ENCODE measurements at regions of chr9 and their contacts with region 1.

Region 1: GRCh38 chr9:12329623-12329985 is 363.6 kb upstream of the TYRP1 start:
- DNase-seq: no peak
- H3K4me3 ChIP-seq: no peak overlapping the region
- H3K27ac ChIP-seq: no peak overlapping the region
- H3K4me1 ChIP-seq: no peaks in the 10 kb centered on the region
- H3K27me3 ChIP-seq: no peaks in the 10 kb centered on the region
- CTCF ChIP-seq: no peak

Region 2: GRCh38 chr9:10366171-10366779 is 1963.3 kb before region 1 on chr9:
- intact Hi-C with region 1: loop called (anchors 10 kb)
- DNase-seq: peak; percentile 17
- H3K4me3 ChIP-seq: no peak overlapping the region
- H3K27ac ChIP-seq: no peak overlapping the region
- H3K4me1 ChIP-seq: no peaks in the 10 kb centered on the region
- H3K27me3 ChIP-seq: no peaks in the 10 kb centered on the region
- CTCF ChIP-seq: peak; percentile 42

Region 3: DNA sequence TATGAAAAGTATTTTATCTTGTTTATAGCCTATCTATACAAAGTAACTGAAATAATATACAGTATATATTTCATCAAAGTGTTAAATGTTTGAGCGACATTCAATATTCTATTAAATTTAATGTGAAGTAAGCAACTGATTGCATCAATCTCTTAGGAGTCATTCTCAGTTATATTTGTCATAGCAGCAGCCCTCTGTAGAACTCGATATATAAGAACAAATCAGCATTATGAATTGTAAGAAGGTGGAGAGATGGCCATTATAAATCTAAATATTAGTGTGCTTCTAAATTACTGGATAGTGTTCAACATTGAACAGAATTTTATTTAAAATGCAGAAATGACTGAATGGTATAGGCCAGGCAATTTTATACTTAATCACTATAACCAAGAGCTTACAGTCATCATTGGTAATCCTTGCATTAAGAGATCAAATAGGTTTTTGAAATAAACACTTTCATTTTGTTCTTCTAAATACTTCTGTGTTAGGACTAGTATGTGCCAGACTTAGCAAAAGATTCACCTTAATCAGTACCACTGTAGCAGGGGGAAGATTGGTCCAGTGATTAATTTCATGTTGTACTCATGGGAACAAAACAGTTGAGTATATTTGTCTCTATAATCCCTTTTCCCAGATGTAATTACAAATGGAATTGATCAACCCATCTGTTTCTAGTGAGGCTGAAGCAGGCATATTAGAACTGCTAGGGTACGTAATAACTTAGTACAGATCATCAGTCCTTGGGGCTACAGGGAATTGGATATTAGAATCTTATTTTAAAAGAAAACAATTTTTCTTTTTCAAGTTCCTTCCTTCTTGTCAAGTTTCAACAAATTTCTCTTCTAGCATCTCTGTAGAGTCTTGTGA is 255.3 kb after region 1 on chr9:
- intact Hi-C with region 1: no loop called
- DNase-seq: no peak
- H3K4me3 ChIP-seq: no peak overlapping the region
- H3K27ac ChIP-seq: no peak overlapping the region
- H3K4me1 ChIP-seq: no peaks in the 10 kb centered on the region
- H3K27me3 ChIP-seq: no peaks in the 10 kb centered on the region
- CTCF ChIP-seq: no peak

Region 4: DNA sequence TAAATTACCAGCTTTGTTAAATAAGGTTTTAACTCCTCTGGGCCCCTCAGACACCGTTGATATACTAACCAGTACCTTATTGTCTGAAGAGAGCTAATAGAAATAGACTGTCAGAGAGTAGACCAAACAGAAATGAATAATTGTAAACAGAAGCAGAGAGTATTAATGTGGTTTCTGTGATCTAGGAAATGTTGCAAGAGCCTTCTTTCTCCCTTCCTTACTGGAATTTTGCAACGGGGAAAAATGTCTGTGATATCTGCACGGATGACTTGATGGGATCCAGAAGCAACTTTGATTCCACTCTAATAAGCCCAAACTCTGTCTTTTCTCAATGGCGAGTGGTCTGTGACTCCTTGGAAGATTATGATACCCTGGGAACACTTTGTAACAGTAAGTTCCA is 368.7 kb after region 1 on chr9:
- intact Hi-C with region 1: no loop called
- DNase-seq: no peak
- H3K4me3 ChIP-seq: no peak overlapping the region
- H3K27ac ChIP-seq: no peak overlapping the region
- H3K4me1 ChIP-seq: no peaks in the 10 kb centered on the region
- H3K27me3 ChIP-seq: no peaks in the 10 kb centered on the region
- CTCF ChIP-seq: no peak

Region 5: DNA sequence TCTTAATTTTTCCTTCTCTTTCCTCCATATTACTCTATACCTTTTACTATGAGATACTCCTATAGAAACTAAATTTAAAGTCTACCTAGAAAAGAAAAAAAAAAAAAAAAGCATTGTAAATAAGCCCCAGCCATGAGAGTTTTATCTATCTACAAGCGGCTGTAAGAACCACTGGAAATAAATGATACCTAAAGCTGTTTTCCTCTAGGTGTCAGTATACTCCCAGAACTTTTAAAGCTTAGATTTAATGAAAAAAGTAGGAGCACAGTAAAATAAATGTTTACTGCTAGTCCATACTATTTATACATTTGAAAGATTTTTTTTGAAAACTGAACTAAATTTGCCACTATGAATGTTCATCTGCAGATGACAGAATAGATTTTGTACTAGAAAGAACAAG is 389.8 kb after region 1 on chr9:
- intact Hi-C with region 1: no loop called
- DNase-seq: no peak
- H3K4me3 ChIP-seq: no peak overlapping the region
- H3K27ac ChIP-seq: no peak overlapping the region
- H3K4me1 ChIP-seq: no peaks in the 10 kb centered on the region
- H3K27me3 ChIP-seq: no peaks in the 10 kb centered on the region
- CTCF ChIP-seq: peak; percentile 59

Measured in colonic mucosa (tissue), 4 donors.